CD4-positive, alpha-beta memory T cell (primary cell): ENCODE measurements at regions of chr6 and their contacts with region 1.

Region 1: DNA sequence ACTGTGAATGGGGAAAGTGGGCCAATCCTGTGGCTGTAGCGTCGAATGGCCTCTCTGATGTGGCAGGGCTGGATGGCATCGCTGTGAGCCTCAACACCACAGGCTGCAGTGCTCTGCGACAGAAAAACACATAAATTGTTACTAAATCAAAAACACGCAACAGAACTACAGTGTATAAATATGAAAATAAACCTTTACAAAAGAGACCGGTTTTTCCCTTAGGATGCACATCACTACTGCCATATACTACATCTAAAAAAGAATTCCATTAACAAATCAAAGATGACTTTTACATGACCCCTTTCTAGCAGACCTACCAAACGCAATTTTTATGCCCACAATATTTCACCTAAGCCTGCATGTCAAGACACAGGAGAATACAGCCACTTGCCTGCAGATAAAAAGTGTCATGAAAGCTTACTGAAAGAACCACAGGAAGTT is 395.5 kb upstream of the RUNX2 start:
- DNase-seq: peak; percentile 52 to 76 (median 60)
- H3K4me3 ChIP-seq: peak overlapping the region in 1 of 2 donors; percentile 23
- H3K4me3 Mint-ChIP-seq: peak overlapping the region; percentile 86 to 97 (median 92)
- H3K27ac ChIP-seq: peak overlapping the region; percentile 68
- H3K27ac Mint-ChIP-seq: peak overlapping the region; percentile 91 to 99 (median 97)
- H3K4me1 ChIP-seq: peaks cover 57% of the 10 kb centered on the region
- H3K4me1 Mint-ChIP-seq: peaks cover 33 to 59% (median 44%) of the 10 kb centered on the region in 4 donors
- H3K27me3 ChIP-seq: no peaks in the 10 kb centered on the region
- H3K27me3 Mint-ChIP-seq: no peaks in the 10 kb centered on the region

Region 2: DNA sequence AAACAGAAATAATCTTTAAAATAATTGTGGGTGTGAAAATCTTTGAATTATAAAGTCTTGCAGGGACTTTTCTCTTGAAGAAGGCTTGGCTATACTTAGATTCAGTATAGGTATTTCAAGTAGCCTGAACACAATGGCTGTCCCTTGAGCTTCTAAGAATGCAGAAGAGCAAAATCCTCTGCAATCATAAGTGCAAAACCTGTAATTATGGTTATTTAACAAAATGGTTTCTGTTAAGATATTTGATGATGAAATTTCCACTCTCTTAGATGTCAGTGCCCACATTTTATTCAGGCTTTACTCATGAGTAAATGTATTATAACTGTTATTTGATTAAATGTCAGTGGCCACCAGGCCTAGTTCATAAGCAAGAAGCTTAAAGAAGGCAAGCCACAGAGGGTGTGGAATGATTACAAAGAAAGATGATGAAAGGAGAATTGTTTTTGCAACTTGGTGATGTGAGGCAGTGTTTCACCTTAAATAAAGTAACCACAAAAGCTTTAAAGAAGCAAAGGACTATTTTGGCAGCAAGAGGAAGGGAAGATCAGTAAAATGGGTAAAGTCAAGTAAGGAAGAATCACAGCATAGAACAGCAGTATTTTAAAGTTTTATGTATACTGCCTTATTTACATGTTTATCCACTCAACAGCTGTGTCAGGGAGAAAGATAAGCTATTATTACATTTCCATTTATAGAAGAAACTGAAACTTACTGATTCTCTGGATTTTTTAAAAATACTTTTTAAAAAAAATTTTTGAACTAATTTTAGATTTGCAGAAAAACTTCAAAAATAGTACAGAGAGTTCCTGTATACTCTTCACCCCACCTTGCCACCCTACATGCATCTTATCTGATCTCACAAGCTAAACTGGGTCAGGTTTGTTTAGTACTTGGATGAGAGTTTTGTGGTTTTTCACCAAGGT is 44.3 kb after region 1 on chr6:
- CTCF ChIA-PET with region 1: interaction called, 3 read pairs
- POLR2A ChIA-PET with region 1: interaction called, 16 read pairs
- intact Hi-C with region 1: loop called (anchors 2 kb)
- DNase-seq: peak; percentile 64 to 81 (median 74)
- H3K4me3 ChIP-seq: no peak overlapping the region
- H3K4me3 Mint-ChIP-seq: peak overlapping the region; percentile 47 to 78 (median 68)
- H3K27ac ChIP-seq: no peak overlapping the region
- H3K27ac Mint-ChIP-seq: peak overlapping the region; percentile 54 to 92 (median 81)
- H3K4me1 ChIP-seq: peaks cover 45% of the 10 kb centered on the region
- H3K4me1 Mint-ChIP-seq: peaks cover 24 to 61% (median 40%) of the 10 kb centered on the region in 4 donors
- H3K27me3 ChIP-seq: no peaks in the 10 kb centered on the region
- H3K27me3 Mint-ChIP-seq: no peaks in the 10 kb centered on the region

Region 3: GRCh38 chr6:45105170-45105820 is 172.6 kb after region 1 on chr6:
- CTCF ChIA-PET with region 1: no interaction called
- POLR2A ChIA-PET with region 1: no interaction called
- intact Hi-C with region 1: no loop called
- DNase-seq: no peak
- H3K4me3 ChIP-seq: no peak overlapping the region
- H3K4me3 Mint-ChIP-seq: no peak overlapping the region
- H3K27ac ChIP-seq: no peak overlapping the region
- H3K27ac Mint-ChIP-seq: no peak overlapping the region
- H3K4me1 ChIP-seq: no peaks in the 10 kb centered on the region
- H3K4me1 Mint-ChIP-seq: peaks cover 5 to 10% (median 8%) of the 10 kb centered on the region in 4 donors
- H3K27me3 ChIP-seq: no peaks in the 10 kb centered on the region
- H3K27me3 Mint-ChIP-seq: no peaks in the 10 kb centered on the region